Panc1 (cell line): ENCODE measurements at regions of chr13 and their contacts with region 1.

Region 1: GRCh38 chr13:32811297-32811800 is 204.9 kb upstream of the KL start:
- DNase-seq: no peak
- ATAC-seq: 0 out of 2 replicates have a peak, but pooled peaks have one; percentile 51
- H3K4me3 ChIP-seq: no peak overlapping the region
- H3K27ac ChIP-seq: no peak overlapping the region
- H3K4me1 ChIP-seq: no peaks in the 10 kb centered on the region
- H3K27me3 ChIP-seq: no peaks in the 10 kb centered on the region
- CTCF ChIP-seq: no peak

Region 2: GRCh38 chr13:30818323-30818960 is 1992.9 kb before region 1 on chr13:
- CTCF ChIA-PET with region 1: no interaction called
- POLR2A ChIA-PET with region 1: no interaction called
- in situ Hi-C with region 1: no loop called
- intact Hi-C with region 1: no loop called
- DNase-seq: no peak
- ATAC-seq: no peak
- H3K4me3 ChIP-seq: no peak overlapping the region
- H3K27ac ChIP-seq: no peak overlapping the region
- H3K4me1 ChIP-seq: no peaks in the 10 kb centered on the region
- H3K27me3 ChIP-seq: no peaks in the 10 kb centered on the region
- CTCF ChIP-seq: no peak

Region 3: GRCh38 chr13:32824671-32825070 is 13.3 kb after region 1 on chr13:
- CTCF ChIA-PET with region 1: no interaction called
- POLR2A ChIA-PET with region 1: no interaction called
- in situ Hi-C with region 1: no loop called
- intact Hi-C with region 1: loop called (anchors 1 kb)
- DNase-seq: peak; percentile 74
- ATAC-seq: peak; percentile 86
- H3K4me3 ChIP-seq: no peak overlapping the region
- H3K27ac ChIP-seq: no peak overlapping the region
- H3K4me1 ChIP-seq: peaks cover 12% of the 10 kb centered on the region
- H3K27me3 ChIP-seq: no peaks in the 10 kb centered on the region
- CTCF ChIP-seq: no peak